Activated B cell treated with CpG ODN at 0.5 μM for 24 hours (primary cell): ENCODE measurements at regions of chr5 and their contacts with region 1.

Region 1: DNA sequence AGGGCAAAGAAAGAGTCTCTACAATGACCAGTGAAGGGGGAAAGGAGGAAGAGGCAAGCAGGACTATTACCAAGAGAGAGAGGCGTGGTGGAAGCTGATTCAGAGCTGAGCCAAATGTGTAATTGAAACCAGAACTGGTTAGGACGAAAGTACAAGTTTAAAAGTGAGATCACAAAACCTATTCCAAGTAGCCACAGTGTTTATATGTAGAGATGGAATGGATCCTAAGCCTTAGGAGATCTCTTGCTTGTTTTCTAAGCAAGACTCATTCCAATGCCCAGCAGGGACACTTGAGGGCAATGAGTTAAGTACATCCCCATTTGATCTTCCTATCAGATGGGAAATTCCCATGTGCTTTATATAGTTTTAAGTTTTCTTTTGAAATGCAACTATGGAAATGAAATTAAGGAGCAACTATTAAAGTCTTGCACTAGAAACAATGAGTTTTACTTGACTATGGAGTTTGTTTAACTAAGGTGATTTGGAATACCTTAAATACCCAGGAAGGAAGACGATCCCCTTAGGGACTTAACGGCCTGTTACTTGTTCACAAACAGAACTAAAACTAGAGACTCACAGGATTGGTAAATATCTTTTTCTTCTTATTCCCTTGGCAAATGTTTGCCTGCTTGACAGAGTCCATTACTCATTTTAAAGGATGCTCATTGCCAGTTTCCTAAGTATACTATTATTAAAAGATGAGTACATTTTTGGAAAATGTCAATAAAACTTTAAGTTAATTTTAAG is 51.1 kb upstream of the SNX2 start:
- DNase-seq: no peak
- ATAC-seq: peak; percentile 89
- H3K4me3 Mint-ChIP-seq: peak overlapping the region; percentile 74
- H3K27ac Mint-ChIP-seq: peak overlapping the region; percentile 91
- H3K4me1 Mint-ChIP-seq: peaks cover 57% of the 10 kb centered on the region
- H3K27me3 Mint-ChIP-seq: no peaks in the 10 kb centered on the region
- CTCF ChIP-seq: no peak

Region 2: GRCh38 chr5:122736086-122736845 is 12.5 kb after region 1 on chr5:
- CTCF ChIA-PET with region 1: no interaction called
- POLR2A ChIA-PET with region 1: interaction called, 7 read pairs
- intact Hi-C with region 1: loop called (anchors 1 kb)
- DNase-seq: no peak
- ATAC-seq: peak; percentile 95
- H3K4me3 Mint-ChIP-seq: peak overlapping the region; percentile 9
- H3K27ac Mint-ChIP-seq: peak overlapping the region; percentile 26
- H3K4me1 Mint-ChIP-seq: peaks cover 16% of the 10 kb centered on the region
- H3K27me3 Mint-ChIP-seq: no peaks in the 10 kb centered on the region
- CTCF ChIP-seq: no peak

Region 3: GRCh38 chr5:122756263-122756911 is 32.6 kb after region 1 on chr5:
- CTCF ChIA-PET with region 1: no interaction called
- POLR2A ChIA-PET with region 1: no interaction called
- intact Hi-C with region 1: loop called (anchors 1 kb)
- DNase-seq: no peak
- ATAC-seq: peak; percentile 86
- H3K4me3 Mint-ChIP-seq: peak overlapping the region; percentile 1
- H3K27ac Mint-ChIP-seq: peak overlapping the region; percentile 72
- H3K4me1 Mint-ChIP-seq: peaks cover 28% of the 10 kb centered on the region
- H3K27me3 Mint-ChIP-seq: no peaks in the 10 kb centered on the region
- CTCF ChIP-seq: no peak

Region 4: DNA sequence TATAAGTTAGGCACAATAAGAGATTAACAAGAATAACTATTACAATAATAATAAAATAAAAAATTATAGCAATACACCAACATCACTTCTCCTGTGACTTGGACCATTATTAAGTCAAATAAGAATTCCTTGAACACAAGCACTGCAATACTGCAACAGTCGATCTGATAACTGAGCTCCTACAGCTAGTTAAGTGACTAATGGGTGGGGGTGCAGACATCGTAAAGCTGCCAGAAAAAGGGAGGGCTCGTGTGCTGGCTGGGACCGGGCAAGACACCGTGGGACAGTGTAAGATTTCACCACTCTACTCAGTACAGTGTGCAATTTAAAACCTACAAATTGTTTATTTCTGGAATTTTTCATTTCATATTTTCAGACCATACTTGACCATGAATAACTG is 200.4 kb after region 1 on chr5:
- CTCF ChIA-PET with region 1: no interaction called
- POLR2A ChIA-PET with region 1: no interaction called
- intact Hi-C with region 1: no loop called
- DNase-seq: no peak
- ATAC-seq: no peak
- H3K4me3 Mint-ChIP-seq: no peak overlapping the region
- H3K27ac Mint-ChIP-seq: no peak overlapping the region
- H3K4me1 Mint-ChIP-seq: no peaks in the 10 kb centered on the region
- H3K27me3 Mint-ChIP-seq: no peaks in the 10 kb centered on the region
- CTCF ChIP-seq: no peak